ENCODE measurements at regions of chr10 and their contacts with region 1.

Region 1: DNA sequence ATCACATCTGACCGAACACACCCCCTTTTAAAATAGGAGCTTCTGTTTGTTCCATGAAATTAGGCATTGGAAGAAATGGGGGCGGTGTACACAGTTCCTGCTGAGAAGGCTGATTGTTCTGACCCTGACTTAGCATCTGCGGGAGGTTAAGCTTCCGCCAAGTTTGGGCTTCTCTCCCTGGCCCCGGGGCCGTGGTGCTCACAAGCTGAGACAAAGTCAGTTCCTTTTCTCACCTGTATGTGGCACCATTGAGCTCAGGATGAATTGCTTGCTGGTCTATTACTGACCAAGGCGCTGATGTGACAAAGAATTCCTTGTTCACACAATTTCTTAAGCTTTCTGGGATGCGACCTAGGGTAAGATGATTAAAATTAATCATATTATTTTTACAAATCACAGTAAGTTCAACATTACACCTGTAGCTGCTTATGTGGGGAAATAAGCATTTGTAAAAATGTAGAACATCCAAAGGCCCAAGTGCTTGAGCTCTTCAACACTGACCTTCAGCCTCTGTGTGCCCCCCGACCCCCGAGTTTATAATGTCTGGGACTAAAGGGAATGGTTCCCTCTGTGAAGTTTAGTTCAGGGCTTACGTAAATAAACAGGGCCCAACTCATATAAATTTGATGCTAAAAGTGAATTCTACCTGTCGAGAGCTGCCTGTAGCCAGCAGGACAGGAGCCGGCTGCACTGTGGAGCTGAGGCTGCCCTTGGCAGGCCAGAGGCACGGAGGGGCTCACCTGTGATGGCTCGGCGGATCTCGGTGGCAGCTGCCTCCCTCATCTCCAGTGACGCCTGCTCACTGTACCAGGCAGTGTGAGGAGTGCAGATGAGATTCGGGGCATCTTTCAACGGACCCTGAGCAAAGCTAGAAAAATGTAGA is 50.8 kb downstream of the ZRANB1 start:
- DNase-seq: peak; percentile 77 to 89
- ATAC-seq: peak; percentile 86
- H3K4me3 ChIP-seq: no peak overlapping the region
- H3K27ac ChIP-seq: no peak overlapping the region
- H3K4me1 ChIP-seq: no peaks in the 10 kb centered on the region
- H3K27me3 ChIP-seq: no peaks in the 10 kb centered on the region

Region 2: GRCh38 chr10:125048101-125048864 is 55.6 kb after region 1 on chr10:
- intact Hi-C with region 1: loop called in 1 of 2 experiments (anchors 5 kb)
- DNase-seq: peak; percentile 91 to 95
- ATAC-seq: peak; percentile 92
- H3K4me3 ChIP-seq: no peak overlapping the region
- H3K27ac ChIP-seq: no peak overlapping the region
- H3K4me1 ChIP-seq: no peaks in the 10 kb centered on the region
- H3K27me3 ChIP-seq: no peaks in the 10 kb centered on the region

Region 3: GRCh38 chr10:125343118-125343925 is 350.6 kb after region 1 on chr10:
- intact Hi-C with region 1: loop called in 1 of 2 experiments (anchors 5 kb)
- DNase-seq: no peak
- ATAC-seq: no peak
- H3K4me3 ChIP-seq: no peak overlapping the region
- H3K27ac ChIP-seq: no peak overlapping the region
- H3K4me1 ChIP-seq: no peaks in the 10 kb centered on the region
- H3K27me3 ChIP-seq: no peaks in the 10 kb centered on the region